ENCODE measurements at regions of chr2 and their contacts with region 1.

Region 1: GRCh38 chr2:179129574-179130238 is 79.8 kb upstream of the CCDC141 start:
- DNase-seq: peak; percentile 12
- ATAC-seq: no peak
- H3K4me3 Mint-ChIP-seq: no peak overlapping the region
- H3K27ac Mint-ChIP-seq: no peak overlapping the region
- H3K4me1 Mint-ChIP-seq: no peaks in the 10 kb centered on the region
- H3K27me3 Mint-ChIP-seq: no peaks in the 10 kb centered on the region

Region 2: GRCh38 chr2:178761759-178762371 is 367.8 kb before region 1 on chr2:
- CTCF ChIA-PET with region 1: interaction called, 6 read pairs
- POLR2A ChIA-PET with region 1: no interaction called
- intact Hi-C with region 1: loop called (anchors 2 to 10 kb)
- DNase-seq: peak; percentile 44
- ATAC-seq: peak; percentile 66
- H3K4me3 Mint-ChIP-seq: no peak overlapping the region
- H3K27ac Mint-ChIP-seq: no peak overlapping the region
- H3K4me1 Mint-ChIP-seq: no peaks in the 10 kb centered on the region
- H3K27me3 Mint-ChIP-seq: no peaks in the 10 kb centered on the region

Region 3: GRCh38 chr2:178891265-178891958 is 238.3 kb before region 1 on chr2:
- CTCF ChIA-PET with region 1: interaction called, 22 read pairs
- POLR2A ChIA-PET with region 1: no interaction called
- intact Hi-C with region 1: loop called (anchors 1 to 2 kb)
- DNase-seq: peak; percentile 79
- ATAC-seq: peak; percentile 90
- H3K4me3 Mint-ChIP-seq: no peak overlapping the region
- H3K27ac Mint-ChIP-seq: no peak overlapping the region
- H3K4me1 Mint-ChIP-seq: peaks cover 9% of the 10 kb centered on the region
- H3K27me3 Mint-ChIP-seq: no peaks in the 10 kb centered on the region

Region 4: GRCh38 chr2:178962805-178963433 is 166.8 kb before region 1 on chr2:
- CTCF ChIA-PET with region 1: no interaction called
- POLR2A ChIA-PET with region 1: no interaction called
- intact Hi-C with region 1: loop called in 1 of 2 experiments (anchors 5 kb)
- DNase-seq: no peak
- ATAC-seq: no peak
- H3K4me3 Mint-ChIP-seq: no peak overlapping the region
- H3K27ac Mint-ChIP-seq: no peak overlapping the region
- H3K4me1 Mint-ChIP-seq: no peaks in the 10 kb centered on the region
- H3K27me3 Mint-ChIP-seq: no peaks in the 10 kb centered on the region

Region 5: DNA sequence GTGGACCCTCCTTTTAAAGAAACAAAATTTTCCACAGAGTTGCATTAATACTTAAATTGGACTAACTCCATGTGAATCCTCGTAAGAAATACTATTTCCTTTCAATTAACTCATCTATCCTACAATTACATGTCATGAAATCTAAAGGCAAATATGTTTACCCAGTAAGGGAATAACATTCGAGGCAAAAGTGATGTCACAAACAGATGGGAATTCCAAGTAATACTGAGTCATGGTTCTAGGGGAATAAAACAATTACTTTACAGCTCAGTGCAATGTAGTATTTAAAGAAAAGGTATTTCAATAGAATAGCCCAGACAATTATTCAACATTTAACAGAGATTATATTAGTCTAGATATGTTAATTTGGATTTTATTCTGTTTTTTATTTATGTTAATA is 525.9 kb after region 1 on chr2:
- CTCF ChIA-PET with region 1: no interaction called
- POLR2A ChIA-PET with region 1: no interaction called
- intact Hi-C with region 1: no loop called
- DNase-seq: no peak
- ATAC-seq: no peak
- H3K4me3 Mint-ChIP-seq: no peak overlapping the region
- H3K27ac Mint-ChIP-seq: no peak overlapping the region
- H3K4me1 Mint-ChIP-seq: no peaks in the 10 kb centered on the region
- H3K27me3 Mint-ChIP-seq: no peaks in the 10 kb centered on the region

Measured in activated CD4-positive, alpha-beta T cell treated with anti-CD3 and anti-CD28 coated beads for 36 hours (primary cell).